ENCODE measurements at regions of chr5 and their contacts with region 1.

Region 1: DNA sequence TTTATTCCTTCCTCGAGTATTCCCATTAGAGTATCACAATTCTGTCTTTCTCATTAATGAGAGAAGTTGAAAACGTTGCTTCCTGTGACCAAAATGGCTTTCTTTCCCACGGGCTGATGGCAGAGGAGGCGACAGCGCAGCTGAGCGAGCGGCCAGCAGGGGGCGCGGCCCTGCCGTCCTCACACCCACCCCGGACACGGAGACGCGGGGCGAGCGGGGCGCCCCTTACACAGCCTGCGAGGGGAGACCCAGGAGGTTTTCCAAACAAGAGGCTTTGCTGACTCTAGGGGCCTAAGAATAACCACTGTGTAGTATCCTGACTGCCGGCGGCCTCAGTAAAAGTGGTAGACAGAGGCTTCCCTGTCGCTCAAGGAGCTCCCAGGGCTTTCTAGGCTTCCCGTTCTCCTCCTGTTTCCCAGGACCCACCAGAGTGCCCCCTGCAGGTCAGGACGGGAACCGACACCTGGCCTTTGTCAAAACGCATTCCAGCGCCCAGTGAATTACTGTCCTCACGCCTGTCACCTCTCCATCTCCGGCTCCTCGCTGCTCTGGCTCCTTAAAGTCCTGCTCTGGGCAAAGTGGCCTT is 27.3 kb upstream of the FGF1 start:
- DNase-seq: peak; percentile 75 to 90
- H3K4me3 ChIP-seq: peak overlapping the region; percentile 72; the same call in 1 of the 2 replicates
- H3K27ac ChIP-seq: peak overlapping the region; percentile 46
- H3K4me1 ChIP-seq: no peaks in the 10 kb centered on the region; the same call in 1 of the 2 replicates
- H3K27me3 ChIP-seq: no peaks in the 10 kb centered on the region
- CTCF ChIP-seq: peak; percentile 99

Region 2: GRCh38 chr5:142151436-142152383 is 561.5 kb before region 1 on chr5:
- CTCF ChIA-PET with region 1: no interaction called
- POLR2A ChIA-PET with region 1: no interaction called
- intact Hi-C with region 1: loop called (anchors 5 kb)
- DNase-seq: peak; percentile 48 to 49
- H3K4me3 ChIP-seq: no peak overlapping the region
- H3K27ac ChIP-seq: no peak overlapping the region
- H3K4me1 ChIP-seq: peaks cover 9% of the 10 kb centered on the region; the same call in 1 of the 2 replicates
- H3K27me3 ChIP-seq: no peaks in the 10 kb centered on the region
- CTCF ChIP-seq: peak; percentile 92

Region 3: DNA sequence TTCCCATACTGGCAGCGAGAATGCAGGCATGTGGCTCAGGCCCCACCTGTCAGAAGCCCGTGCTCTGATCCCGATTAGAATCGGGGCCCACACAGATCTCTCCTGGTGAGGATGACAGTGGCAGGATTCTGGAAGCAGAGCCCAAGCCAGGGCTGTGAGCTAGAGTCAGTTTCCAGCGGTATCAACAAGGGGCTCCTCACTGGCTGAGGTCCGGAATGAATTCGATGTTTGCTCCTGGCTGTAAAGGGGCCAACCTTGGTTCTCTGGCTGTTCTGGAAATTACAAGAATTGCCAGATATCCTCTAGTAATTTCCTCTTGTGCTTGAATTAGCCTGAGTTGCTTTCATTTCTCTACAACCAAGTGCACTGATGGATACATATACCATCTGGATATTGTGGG is 259.3 kb before region 1 on chr5:
- CTCF ChIA-PET with region 1: no interaction called
- POLR2A ChIA-PET with region 1: no interaction called
- intact Hi-C with region 1: no loop called
- DNase-seq: no peak
- H3K4me3 ChIP-seq: no peak overlapping the region
- H3K27ac ChIP-seq: no peak overlapping the region
- H3K4me1 ChIP-seq: no peaks in the 10 kb centered on the region
- H3K27me3 ChIP-seq: no peaks in the 10 kb centered on the region
- CTCF ChIP-seq: no peak

Region 4: DNA sequence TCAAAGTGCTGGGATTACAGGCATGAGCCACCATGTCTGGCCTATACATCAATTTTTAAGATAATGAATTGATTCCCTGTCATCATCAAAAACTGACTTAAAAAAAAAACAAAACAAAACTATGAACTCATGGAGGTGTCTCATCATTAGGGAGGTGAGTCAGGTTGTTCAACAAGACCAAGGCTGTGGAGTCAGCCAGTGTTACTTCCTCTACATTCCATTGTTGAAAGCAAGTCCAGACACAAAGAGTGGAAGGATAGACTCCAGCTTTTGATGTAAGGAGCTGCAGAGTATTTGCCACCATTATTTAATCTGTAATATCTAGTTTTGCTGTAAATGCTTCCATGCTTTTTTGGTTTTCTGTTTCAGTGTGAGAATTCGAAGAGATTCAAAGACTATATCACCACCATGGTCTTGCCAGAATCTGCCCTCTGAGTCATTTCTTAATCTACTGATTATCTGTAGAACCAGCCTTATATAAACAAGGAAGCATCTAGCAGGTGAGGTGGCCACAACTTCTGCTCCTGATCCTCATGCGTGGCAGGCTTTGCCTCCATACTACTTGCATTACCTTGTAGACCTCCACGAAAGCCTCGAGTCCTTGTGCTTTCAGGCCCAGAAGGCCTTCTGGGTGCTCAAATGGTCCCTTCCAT is 183.5 kb before region 1 on chr5:
- CTCF ChIA-PET with region 1: no interaction called
- POLR2A ChIA-PET with region 1: no interaction called
- intact Hi-C with region 1: no loop called
- DNase-seq: peak; percentile 46 to 95
- H3K4me3 ChIP-seq: no peak overlapping the region
- H3K27ac ChIP-seq: peak overlapping the region; percentile 83
- H3K4me1 ChIP-seq: peaks cover 44% of the 10 kb centered on the region
- H3K27me3 ChIP-seq: no peaks in the 10 kb centered on the region
- CTCF ChIP-seq: no peak

Region 5: GRCh38 chr5:142644640-142645361 is 68.4 kb before region 1 on chr5:
- CTCF ChIA-PET with region 1: interaction called, 14 read pairs
- POLR2A ChIA-PET with region 1: no interaction called
- intact Hi-C with region 1: no loop called
- DNase-seq: peak; percentile 80 to 95
- H3K4me3 ChIP-seq: peak overlapping the region; percentile 6; the same call in 1 of the 2 replicates
- H3K27ac ChIP-seq: peak overlapping the region; percentile 75
- H3K4me1 ChIP-seq: peaks cover 22% of the 10 kb centered on the region
- H3K27me3 ChIP-seq: no peaks in the 10 kb centered on the region
- CTCF ChIP-seq: no peak

Region 6: DNA sequence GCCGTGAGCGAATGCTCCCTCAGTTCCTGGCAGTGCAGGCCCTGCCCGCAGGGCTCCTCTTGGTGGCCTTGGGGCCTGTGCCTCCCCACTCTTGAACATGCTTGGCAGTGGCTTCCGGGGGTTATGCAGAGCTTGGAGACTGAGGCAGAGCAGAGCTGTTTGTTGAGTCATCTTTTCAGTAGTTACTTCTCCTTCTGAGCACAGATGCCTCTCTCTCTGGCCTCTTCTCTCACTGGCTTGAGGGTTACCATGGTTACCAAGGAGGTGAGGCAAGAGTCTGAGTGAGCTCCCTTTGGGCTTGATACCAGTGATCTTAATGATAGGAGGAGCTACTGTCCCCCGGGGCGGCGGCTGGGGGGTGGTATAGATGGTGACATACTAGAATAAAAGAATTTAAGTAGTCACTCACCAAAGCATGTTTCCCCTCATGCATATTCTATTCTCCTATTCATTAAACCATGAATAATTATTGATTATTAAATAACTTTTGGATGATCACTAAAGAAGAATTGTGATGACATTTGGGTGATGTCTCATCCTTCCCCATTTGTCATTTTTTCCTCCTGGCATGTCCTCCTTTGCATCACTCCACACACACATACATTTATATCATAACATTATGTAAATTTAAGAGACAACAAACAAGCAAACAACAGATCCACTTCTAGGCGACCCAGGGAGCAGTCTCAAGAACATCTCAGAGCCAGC is 168.0 kb after region 1 on chr5:
- CTCF ChIA-PET with region 1: interaction called, 9 read pairs
- POLR2A ChIA-PET with region 1: no interaction called
- intact Hi-C with region 1: loop called (anchors 1 kb)
- DNase-seq: no peak
- H3K4me3 ChIP-seq: no peak overlapping the region
- H3K27ac ChIP-seq: no peak overlapping the region
- H3K4me1 ChIP-seq: peaks cover 13% of the 10 kb centered on the region
- H3K27me3 ChIP-seq: no peaks in the 10 kb centered on the region
- CTCF ChIP-seq: no peak

Region 7: GRCh38 chr5:142915813-142916424 is 202.7 kb after region 1 on chr5:
- CTCF ChIA-PET with region 1: interaction called, 11 read pairs
- POLR2A ChIA-PET with region 1: no interaction called
- intact Hi-C with region 1: loop called (anchors 1 kb)
- DNase-seq: peak in 1 of 2 experiments; percentile 40
- H3K4me3 ChIP-seq: no peak overlapping the region
- H3K27ac ChIP-seq: no peak overlapping the region
- H3K4me1 ChIP-seq: peaks cover 25% of the 10 kb centered on the region
- H3K27me3 ChIP-seq: no peaks in the 10 kb centered on the region
- CTCF ChIP-seq: peak; percentile 72

Region 8: GRCh38 chr5:144191998-144192397 is 1478.8 kb after region 1 on chr5:
- CTCF ChIA-PET with region 1: no interaction called
- POLR2A ChIA-PET with region 1: no interaction called
- intact Hi-C with region 1: loop called (anchors 5 kb)
- DNase-seq: peak in 1 of 2 experiments; percentile 56
- H3K4me3 ChIP-seq: peak overlapping the region; percentile 21; the same call in 1 of the 2 replicates
- H3K27ac ChIP-seq: no peak overlapping the region
- H3K4me1 ChIP-seq: peaks cover 20% of the 10 kb centered on the region
- H3K27me3 ChIP-seq: no peaks in the 10 kb centered on the region
- CTCF ChIP-seq: peak; percentile 49; the same call in 1 of the 2 replicates

Measured in PC-9 (cell line).